Lower lobe of right lung (tissue), 2 donors: ENCODE measurements at regions of chr1 and their contacts with region 1.

Region 1: DNA sequence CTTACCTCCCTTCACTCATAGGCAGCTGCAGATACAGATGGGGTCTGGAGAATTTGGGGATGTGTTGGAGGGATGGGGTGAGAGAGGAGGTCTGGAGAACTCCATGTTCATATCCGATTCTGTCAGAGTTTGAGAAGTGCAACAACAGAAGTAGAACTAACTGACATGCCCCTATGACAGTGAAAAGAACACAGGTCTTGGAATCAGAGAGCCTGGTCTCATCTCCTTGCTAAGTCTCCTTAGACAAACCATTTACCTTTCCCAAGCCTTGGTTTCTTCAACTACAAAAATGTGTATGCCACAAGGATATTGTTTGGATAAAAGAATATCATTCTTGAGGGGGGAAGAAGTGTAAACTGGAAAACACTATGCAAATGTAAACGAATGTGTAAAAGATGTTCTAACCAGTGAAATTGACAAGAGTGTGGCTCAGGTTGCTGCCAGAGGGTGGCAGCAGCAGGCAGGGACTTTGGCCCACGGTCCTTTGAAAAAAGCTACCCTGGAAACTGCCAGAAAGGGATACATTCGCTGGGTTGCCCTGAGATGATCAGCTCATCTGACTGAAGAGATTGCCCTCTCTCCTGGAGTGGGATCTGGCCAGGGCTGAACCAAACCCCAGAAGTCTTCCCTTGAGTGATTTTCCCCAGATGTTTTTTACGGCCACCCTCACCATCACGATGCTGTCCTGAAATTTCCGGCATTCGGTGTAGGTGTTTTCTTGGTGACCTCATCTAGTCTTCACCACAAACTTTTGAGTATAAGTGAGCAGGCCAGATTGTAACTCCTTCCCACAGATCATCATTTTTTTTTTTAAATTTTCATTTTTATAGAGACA is 17.0 kb upstream of the CD2 start:
- DNase-seq: no peak
- ATAC-seq: peak; percentile 53 to 78
- H3K4me3 ChIP-seq: no peak overlapping the region
- H3K27ac ChIP-seq: no peak overlapping the region
- H3K4me1 ChIP-seq: peaks cover 7% of the 10 kb centered on the region
- H3K27me3 ChIP-seq: no peaks in the 10 kb centered on the region
- CTCF ChIP-seq: peak; percentile 73

Region 2: GRCh38 chr1:116826818-116827606 is 89.8 kb after region 1 on chr1:
- intact Hi-C with region 1: loop called (anchors 10 kb)
- DNase-seq: no peak
- ATAC-seq: no peak
- H3K4me3 ChIP-seq: no peak overlapping the region
- H3K27ac ChIP-seq: no peak overlapping the region
- H3K4me1 ChIP-seq: no peaks in the 10 kb centered on the region
- H3K27me3 ChIP-seq: no peaks in the 10 kb centered on the region
- CTCF ChIP-seq: no peak

Region 3: GRCh38 chr1:117059678-117060440 is 322.6 kb after region 1 on chr1 and contains the start of gene TTF2:
- intact Hi-C with region 1: loop called (anchors 5 kb)
- DNase-seq: peak; percentile 89
- ATAC-seq: peak; percentile 99 to 100
- H3K4me3 ChIP-seq: peak within 1 kb of the TSS; percentile 85
- H3K27ac ChIP-seq: peak within 1 kb of the TSS; percentile 79
- H3K4me1 ChIP-seq: peaks cover 16% of the 10 kb centered on the region
- H3K27me3 ChIP-seq: no peaks in the 10 kb centered on the region
- CTCF ChIP-seq: peak; percentile 14
- total RNA-seq, gene TTF2: 18.0 TPM